ENCODE measurements at regions of chr6 and their contacts with region 1.

Region 1: GRCh38 chr6:33247977-33248924 is 23.4 kb downstream of the VPS52 start:
- DNase-seq: peak; percentile 95
- H3K4me3 ChIP-seq: peak overlapping the region; percentile 68 to 72
- H3K27ac ChIP-seq: peak overlapping the region; percentile 94 to 98
- H3K4me1 ChIP-seq: peaks cover 21% of the 10 kb centered on the region
- H3K27me3 ChIP-seq: no peaks in the 10 kb centered on the region
- CTCF ChIP-seq: peak; percentile 85 to 96 (median 93)
- POLR2A ChIP-seq: no peak

Region 2: GRCh38 chr6:33161354-33162331 is 86.6 kb before region 1 on chr6:
- intact Hi-C with region 1: loop called (anchors 2 kb)
- DNase-seq: peak; percentile 80
- H3K4me3 ChIP-seq: peak overlapping the region; percentile 46 to 50
- H3K27ac ChIP-seq: no peak overlapping the region
- H3K4me1 ChIP-seq: peaks cover 10% of the 10 kb centered on the region
- H3K27me3 ChIP-seq: no peaks in the 10 kb centered on the region
- CTCF ChIP-seq: peak; percentile 87 to 90 (median 89)
- POLR2A ChIP-seq: no peak

Measured in testis (tissue), 5 donors.